Caco-2 (cell line): ENCODE measurements at regions of chr1 and their contacts with region 1.

Region 1: DNA sequence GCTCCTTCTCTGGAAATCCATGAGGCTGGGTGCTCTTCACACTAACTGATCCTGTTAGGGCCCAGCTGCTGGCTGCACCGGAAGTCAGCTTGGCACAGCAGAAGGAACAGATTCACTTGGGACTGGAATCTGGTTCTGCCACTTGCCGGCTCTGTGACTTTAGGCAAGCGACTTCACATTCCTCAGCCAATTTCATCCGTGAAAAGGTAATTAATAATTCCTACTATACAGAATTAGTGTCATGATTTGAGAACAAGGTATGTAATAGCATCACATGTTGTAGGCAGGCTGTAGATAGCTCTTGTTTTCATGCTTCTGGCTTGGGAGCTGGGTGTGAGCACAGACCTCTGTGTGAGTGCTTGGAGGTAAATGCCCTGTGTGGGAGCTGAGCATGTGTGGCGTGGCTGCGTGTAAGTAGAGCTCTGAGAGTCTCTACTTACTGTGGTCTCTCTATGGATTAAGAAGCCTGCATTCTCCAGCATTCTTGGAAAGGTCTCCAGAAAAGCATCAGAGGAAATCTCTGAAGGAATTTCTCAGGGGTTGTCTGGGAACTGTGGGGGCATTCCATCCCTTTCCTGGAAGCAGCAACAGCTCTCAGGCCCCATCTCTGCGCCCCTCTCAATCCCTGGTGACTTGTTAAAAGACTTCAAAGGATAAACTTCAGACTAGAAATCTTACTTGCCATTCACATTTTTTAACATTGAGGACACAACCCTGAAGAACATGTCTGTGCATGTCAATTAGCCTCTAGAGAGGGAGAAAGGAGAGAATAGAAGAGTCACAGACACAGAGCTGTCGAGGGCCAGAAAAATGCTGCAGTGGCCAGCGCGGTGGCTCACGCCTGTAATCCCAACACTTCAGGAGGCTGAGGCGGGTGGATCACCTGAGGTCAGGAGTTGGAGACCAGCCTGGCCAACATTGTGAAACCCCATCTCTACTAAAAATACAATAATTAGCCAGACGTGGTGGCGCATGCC is 47.7 kb upstream of the PPM1J start:
- DNase-seq: no peak
- H3K4me3 ChIP-seq: no peak overlapping the region
- H3K4me3 Mint-ChIP-seq: no peak overlapping the region
- H3K27ac Mint-ChIP-seq: peak overlapping the region; percentile 70
- H3K4me1 ChIP-seq: peaks cover 21% of the 10 kb centered on the region
- H3K4me1 Mint-ChIP-seq: peaks cover 21% of the 10 kb centered on the region
- H3K27me3 ChIP-seq: no peaks in the 10 kb centered on the region
- H3K27me3 Mint-ChIP-seq: no peaks in the 10 kb centered on the region
- CTCF ChIP-seq: no peak

Region 2: DNA sequence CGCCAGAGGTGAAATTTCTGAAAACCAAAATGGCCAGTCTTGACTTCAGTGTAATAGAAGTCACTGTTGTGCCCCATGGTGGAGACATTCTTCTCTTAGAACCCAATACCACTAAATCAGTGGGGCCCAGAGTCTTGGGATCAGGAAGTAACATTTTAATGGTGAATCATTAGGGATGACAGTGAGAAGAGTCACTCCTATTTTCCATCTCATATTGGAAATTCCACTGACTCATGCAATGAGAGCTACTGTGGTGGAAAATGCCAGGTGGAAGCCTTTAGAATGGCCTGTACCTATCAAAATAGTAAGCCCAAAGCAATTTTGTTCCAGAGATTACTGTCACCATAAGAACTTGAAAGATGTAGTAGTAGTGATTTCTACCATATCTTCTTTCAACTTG is 27.1 kb before region 1 on chr1:
- CTCF ChIA-PET with region 1: no interaction called
- POLR2A ChIA-PET with region 1: no interaction called
- intact Hi-C with region 1: loop called (anchors 2 kb)
- DNase-seq: no peak
- H3K4me3 ChIP-seq: no peak overlapping the region
- H3K4me3 Mint-ChIP-seq: no peak overlapping the region
- H3K27ac Mint-ChIP-seq: no peak overlapping the region
- H3K4me1 ChIP-seq: no peaks in the 10 kb centered on the region
- H3K4me1 Mint-ChIP-seq: no peaks in the 10 kb centered on the region
- H3K27me3 ChIP-seq: no peaks in the 10 kb centered on the region
- H3K27me3 Mint-ChIP-seq: no peaks in the 10 kb centered on the region
- CTCF ChIP-seq: no peak

Region 3: DNA sequence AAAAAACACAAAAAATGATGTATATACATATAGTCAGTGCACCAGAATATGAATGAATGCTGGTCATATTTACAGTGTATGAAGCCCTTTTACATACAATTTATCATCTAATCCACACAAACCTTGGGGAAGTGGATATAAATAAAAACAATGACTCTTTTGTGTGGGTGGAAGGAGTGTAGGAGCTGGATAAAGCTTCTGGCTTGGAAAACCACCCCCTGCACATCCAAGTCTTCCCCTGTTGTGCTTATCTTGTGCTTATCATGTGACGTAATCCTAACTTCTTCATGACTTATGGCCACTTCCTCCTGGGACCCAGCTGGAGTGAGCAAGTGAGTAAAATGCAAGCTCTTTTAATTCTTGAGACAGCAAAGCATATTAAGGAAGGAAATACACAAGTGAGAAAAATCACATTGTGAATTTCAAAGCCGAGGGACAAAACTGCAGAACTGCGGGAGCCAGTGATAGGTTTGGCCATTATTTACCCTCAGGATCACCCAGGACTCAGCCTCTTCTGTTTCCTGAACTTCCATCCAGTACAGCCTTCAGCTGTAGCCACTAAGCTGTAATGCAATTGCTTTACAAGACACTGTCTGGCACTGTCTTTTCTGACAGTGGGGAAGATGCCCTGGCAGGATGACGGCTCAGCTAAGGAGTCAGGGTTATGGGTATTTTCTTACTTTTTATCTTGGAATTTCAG is 56.3 kb after region 1 on chr1:
- CTCF ChIA-PET with region 1: no interaction called
- POLR2A ChIA-PET with region 1: no interaction called
- intact Hi-C with region 1: no loop called
- DNase-seq: no peak
- H3K4me3 ChIP-seq: no peak overlapping the region
- H3K4me3 Mint-ChIP-seq: no peak overlapping the region
- H3K27ac Mint-ChIP-seq: no peak overlapping the region
- H3K4me1 ChIP-seq: peaks cover 29% of the 10 kb centered on the region
- H3K4me1 Mint-ChIP-seq: peaks cover 20% of the 10 kb centered on the region
- H3K27me3 ChIP-seq: no peaks in the 10 kb centered on the region
- H3K27me3 Mint-ChIP-seq: no peaks in the 10 kb centered on the region
- CTCF ChIP-seq: no peak

Region 4: DNA sequence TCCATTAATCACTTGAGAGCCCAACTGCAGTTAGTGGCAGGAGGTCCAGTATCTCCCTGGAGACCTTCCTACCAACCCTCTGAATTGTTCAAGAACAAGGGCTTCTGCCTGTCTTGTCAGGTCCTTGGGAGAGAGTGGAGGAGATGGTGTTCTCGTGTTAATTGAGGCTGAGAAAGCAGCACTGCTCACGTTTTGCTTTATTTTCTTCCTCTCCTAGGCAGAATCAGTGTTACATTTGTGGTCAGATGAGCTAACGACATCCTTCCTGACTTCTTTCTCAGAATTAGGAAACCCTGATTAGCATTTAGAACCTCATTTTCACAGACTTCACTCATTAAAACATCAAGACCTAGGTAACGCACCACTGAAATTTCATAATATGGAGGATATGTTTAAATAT is 283.7 kb after region 1 on chr1:
- CTCF ChIA-PET with region 1: no interaction called
- POLR2A ChIA-PET with region 1: no interaction called
- intact Hi-C with region 1: no loop called
- DNase-seq: no peak
- H3K4me3 ChIP-seq: no peak overlapping the region
- H3K4me3 Mint-ChIP-seq: no peak overlapping the region
- H3K27ac Mint-ChIP-seq: no peak overlapping the region
- H3K4me1 ChIP-seq: peaks cover 30% of the 10 kb centered on the region
- H3K4me1 Mint-ChIP-seq: peaks cover 18% of the 10 kb centered on the region
- H3K27me3 ChIP-seq: no peaks in the 10 kb centered on the region
- H3K27me3 Mint-ChIP-seq: no peaks in the 10 kb centered on the region
- CTCF ChIP-seq: no peak